ENCODE measurements at regions of chr2 and their contacts with region 1.

Region 1: DNA sequence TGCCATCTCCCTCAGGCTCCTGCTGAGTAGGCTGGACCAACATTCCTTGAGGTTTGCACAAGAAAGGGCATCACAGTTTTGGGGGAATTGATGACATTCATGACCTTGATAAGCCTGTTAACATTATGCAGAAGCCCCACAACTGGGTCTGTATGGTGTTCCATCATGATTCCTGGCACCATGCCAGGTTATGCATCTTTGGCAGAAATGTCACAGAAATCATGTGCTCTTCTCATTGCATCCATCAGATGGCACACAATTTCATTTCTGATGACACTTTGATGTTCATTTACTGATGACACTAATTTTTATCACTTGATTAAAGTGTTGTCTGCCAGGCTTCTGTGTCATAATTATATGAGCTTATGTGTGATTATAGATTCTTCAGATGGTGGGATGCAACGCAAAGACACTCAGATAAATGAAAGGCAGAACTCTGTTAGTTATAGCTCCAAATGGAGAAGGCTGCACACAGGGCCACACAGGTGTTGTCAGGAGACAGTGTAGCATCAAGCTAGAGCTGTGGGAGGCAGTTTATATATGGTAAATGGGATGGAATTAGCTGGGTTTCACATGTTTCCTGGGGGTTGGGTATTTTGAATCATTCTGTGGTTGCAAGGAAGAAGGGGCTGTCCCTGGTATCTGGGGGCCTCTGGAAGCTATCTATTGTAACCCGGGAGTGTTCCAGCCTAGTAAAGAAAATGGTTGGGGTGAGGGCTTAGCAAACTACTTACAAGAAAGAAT is 191.3 kb downstream of the SLC39A10 start:
- DNase-seq: no peak
- H3K4me3 ChIP-seq: no peak overlapping the region
- H3K27ac ChIP-seq: no peak overlapping the region
- H3K4me1 ChIP-seq: no peaks in the 10 kb centered on the region
- H3K27me3 ChIP-seq: no peaks in the 10 kb centered on the region
- CTCF ChIP-seq: no peak
- POLR2A ChIP-seq: no peak

Region 2: DNA sequence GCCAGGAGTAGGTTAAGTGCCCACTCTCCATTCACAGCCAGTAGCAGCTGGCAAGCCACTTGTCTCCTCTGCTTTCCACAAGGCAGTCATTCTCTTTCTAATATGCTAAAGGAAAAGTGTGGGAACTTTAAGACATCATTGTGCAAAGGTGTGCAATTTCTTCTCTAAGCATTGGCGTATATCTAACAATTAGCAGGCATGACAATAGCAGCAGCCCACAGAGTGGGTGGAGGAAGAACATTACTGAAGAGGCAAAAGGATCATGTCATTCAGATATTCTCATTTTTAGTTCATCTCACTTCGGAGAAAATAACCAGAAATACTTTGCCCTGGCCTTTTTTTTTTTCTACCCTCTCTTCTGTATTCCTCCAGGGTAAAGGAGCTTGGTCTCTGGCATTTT is 42.8 kb after region 1 on chr2:
- intact Hi-C with region 1: loop called (anchors 2 kb)
- DNase-seq: no peak
- H3K4me3 ChIP-seq: no peak overlapping the region
- H3K27ac ChIP-seq: no peak overlapping the region
- H3K4me1 ChIP-seq: no peaks in the 10 kb centered on the region
- H3K27me3 ChIP-seq: no peaks in the 10 kb centered on the region
- CTCF ChIP-seq: no peak
- POLR2A ChIP-seq: no peak

Region 3: GRCh38 chr2:196431957-196432356 is 583.6 kb after region 1 on chr2:
- intact Hi-C with region 1: no loop called
- DNase-seq: no peak
- H3K4me3 ChIP-seq: no peak overlapping the region
- H3K27ac ChIP-seq: no peak overlapping the region
- H3K4me1 ChIP-seq: no peaks in the 10 kb centered on the region
- H3K27me3 ChIP-seq: no peaks in the 10 kb centered on the region
- CTCF ChIP-seq: no peak
- POLR2A ChIP-seq: no peak

Measured in breast epithelium (tissue), 4 donors.